ENCODE measurements at regions of chr20 and their contacts with region 1.

Region 1: GRCh38 chr20:32779500-32780211 is 17.5 kb downstream of the DNMT3B start:
- DNase-seq: no peak
- ATAC-seq: no peak
- H3K4me3 Mint-ChIP-seq: no peak overlapping the region
- H3K27ac Mint-ChIP-seq: no peak overlapping the region
- H3K4me1 Mint-ChIP-seq: peaks cover 31% of the 10 kb centered on the region
- H3K27me3 Mint-ChIP-seq: no peaks in the 10 kb centered on the region

Region 2: GRCh38 chr20:32521780-32522525 is 257.7 kb before region 1 on chr20:
- CTCF ChIA-PET with region 1: interaction called, 12 read pairs
- POLR2A ChIA-PET with region 1: no interaction called
- DNase-seq: peak; percentile 71
- ATAC-seq: peak; percentile 79
- H3K4me3 Mint-ChIP-seq: no peak overlapping the region
- H3K27ac Mint-ChIP-seq: peak overlapping the region; percentile 80
- H3K4me1 Mint-ChIP-seq: peaks cover 56% of the 10 kb centered on the region
- H3K27me3 Mint-ChIP-seq: no peaks in the 10 kb centered on the region

Region 3: DNA sequence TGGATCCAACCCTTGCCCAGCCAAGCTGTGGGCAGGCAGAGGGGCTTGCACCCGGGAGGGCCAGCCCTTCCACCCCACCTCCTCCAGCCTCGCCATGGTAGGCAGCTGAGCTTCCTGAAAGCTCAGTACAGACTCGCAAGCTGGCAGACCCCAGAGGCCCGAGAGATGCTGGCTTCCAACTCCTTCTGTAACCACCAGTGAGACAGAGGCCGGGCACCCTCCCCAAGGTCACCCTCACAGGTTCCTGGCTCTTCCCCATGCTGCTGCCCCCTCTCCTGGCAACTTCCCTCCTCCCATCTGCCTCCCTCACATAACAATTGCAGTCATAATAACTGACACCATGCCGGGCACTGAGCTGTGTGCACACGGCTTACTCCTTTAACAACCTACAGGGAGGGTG is 168.4 kb before region 1 on chr20:
- CTCF ChIA-PET with region 1: no interaction called
- POLR2A ChIA-PET with region 1: no interaction called
- DNase-seq: no peak
- ATAC-seq: no peak
- H3K4me3 Mint-ChIP-seq: no peak overlapping the region
- H3K27ac Mint-ChIP-seq: no peak overlapping the region
- H3K4me1 Mint-ChIP-seq: peaks cover 10% of the 10 kb centered on the region
- H3K27me3 Mint-ChIP-seq: peaks cover 10% of the 10 kb centered on the region

Region 4: GRCh38 chr20:32674362-32674789 is 105.3 kb before region 1 on chr20:
- CTCF ChIA-PET with region 1: interaction called, 370 read pairs
- POLR2A ChIA-PET with region 1: interaction called, 36 read pairs
- DNase-seq: peak; percentile 85
- ATAC-seq: peak; percentile 54
- H3K4me3 Mint-ChIP-seq: no peak overlapping the region
- H3K27ac Mint-ChIP-seq: no peak overlapping the region
- H3K4me1 Mint-ChIP-seq: peaks cover 54% of the 10 kb centered on the region
- H3K27me3 Mint-ChIP-seq: no peaks in the 10 kb centered on the region

Region 5: DNA sequence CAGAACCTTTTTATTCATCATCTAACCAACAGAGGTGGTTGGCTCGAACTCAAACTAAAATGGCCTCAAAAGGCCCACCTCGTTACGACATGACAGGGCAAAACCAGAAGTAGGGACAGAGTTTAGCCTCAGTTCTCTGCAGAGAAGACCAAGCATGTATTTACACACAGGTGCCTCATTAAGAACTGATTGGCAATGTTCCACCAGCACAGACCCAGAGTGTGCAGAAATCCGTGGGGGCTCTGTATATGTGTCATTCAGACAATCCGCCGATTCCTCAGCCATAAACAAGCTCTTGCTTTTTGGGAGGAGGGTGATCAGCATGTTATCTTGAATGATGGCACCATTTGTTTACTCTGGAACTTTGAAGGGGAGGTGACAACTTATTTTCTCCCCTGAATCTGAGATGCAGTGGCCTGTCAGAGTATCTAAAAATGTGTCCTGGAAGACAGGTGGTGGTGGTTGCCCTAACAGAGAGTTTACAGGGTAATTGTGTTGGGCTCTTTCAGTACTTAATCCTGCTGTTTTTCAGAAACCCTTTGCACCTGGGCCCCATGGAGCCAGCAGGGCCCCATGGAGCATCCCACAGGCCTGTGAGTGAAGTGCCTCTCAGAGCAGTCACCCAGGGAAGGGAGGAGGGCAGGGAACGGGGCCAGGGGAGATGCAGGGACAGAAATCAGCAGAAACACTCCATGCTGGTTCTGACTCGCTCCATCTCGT is 76.8 kb before region 1 on chr20:
- CTCF ChIA-PET with region 1: interaction called, 10 read pairs
- POLR2A ChIA-PET with region 1: no interaction called
- DNase-seq: no peak
- ATAC-seq: no peak
- H3K4me3 Mint-ChIP-seq: no peak overlapping the region
- H3K27ac Mint-ChIP-seq: no peak overlapping the region
- H3K4me1 Mint-ChIP-seq: peaks cover 1% of the 10 kb centered on the region
- H3K27me3 Mint-ChIP-seq: no peaks in the 10 kb centered on the region

Region 6: GRCh38 chr20:32743237-32744112 is 36.2 kb before region 1 on chr20 and contains the start of gene COMMD7:
- CTCF ChIA-PET with region 1: interaction called, 60 read pairs
- POLR2A ChIA-PET with region 1: interaction called, 4 read pairs
- DNase-seq: peak; percentile 86
- ATAC-seq: peak; percentile 83
- H3K4me3 Mint-ChIP-seq: peak within 1 kb of the TSS; percentile 98
- H3K27ac Mint-ChIP-seq: peak within 1 kb of the TSS; percentile 98
- H3K4me1 Mint-ChIP-seq: peaks cover 45% of the 10 kb centered on the region
- H3K27me3 Mint-ChIP-seq: no peaks in the 10 kb centered on the region
- total RNA-seq, gene COMMD7: 65.5 to 68.4 TPM

Region 7: GRCh38 chr20:32789896-32790750 is 10.5 kb after region 1 on chr20:
- CTCF ChIA-PET with region 1: interaction called, 27 read pairs
- POLR2A ChIA-PET with region 1: no interaction called
- DNase-seq: peak; percentile 79
- ATAC-seq: peak; percentile 80
- H3K4me3 Mint-ChIP-seq: no peak overlapping the region
- H3K27ac Mint-ChIP-seq: no peak overlapping the region
- H3K4me1 Mint-ChIP-seq: peaks cover 24% of the 10 kb centered on the region
- H3K27me3 Mint-ChIP-seq: no peaks in the 10 kb centered on the region